ENCODE measurements at regions of chr12 and their contacts with region 1.

Region 1: DNA sequence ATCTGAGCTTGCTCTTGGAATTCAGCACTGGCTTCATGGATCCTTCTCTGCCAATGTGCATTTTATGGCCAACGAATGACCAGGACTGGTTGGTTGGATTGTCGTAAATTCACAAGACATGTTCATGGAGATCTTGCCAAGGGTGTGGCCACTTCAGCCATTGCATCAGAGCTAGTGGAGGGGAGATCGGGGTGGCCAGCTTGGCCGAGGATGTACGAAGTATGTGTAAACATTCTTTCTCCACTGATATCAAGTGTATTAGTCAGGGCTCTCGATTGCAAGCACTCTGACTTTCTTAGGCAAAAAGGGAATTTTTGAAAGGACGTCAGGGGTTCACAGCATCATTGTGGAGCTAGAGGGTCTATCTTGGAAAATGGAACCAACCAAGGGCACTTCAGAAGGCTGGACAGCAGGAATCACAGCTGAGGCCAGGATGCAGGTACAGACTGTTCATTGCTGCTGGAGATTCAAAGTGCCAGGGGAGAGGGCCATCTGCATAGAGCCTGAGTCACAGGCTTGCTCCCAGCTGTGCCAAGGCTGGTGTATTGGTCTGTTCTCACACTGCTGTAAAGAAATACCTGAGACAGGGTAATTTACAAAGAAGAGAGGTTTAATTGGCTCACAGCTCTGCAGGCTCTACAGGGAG is 32.8 kb upstream of the ADGRD1 start:
- DNase-seq: peak in 3 of 4 donors; percentile 16 to 32 (median 27)
- ATAC-seq: peak; percentile 47
- H3K4me3 ChIP-seq: no peak overlapping the region
- H3K27ac ChIP-seq: no peak overlapping the region
- H3K4me1 ChIP-seq: peaks cover 10% of the 10 kb centered on the region
- H3K27me3 ChIP-seq: no peaks in the 10 kb centered on the region
- CTCF ChIP-seq: no peak
- POLR2A ChIP-seq: no peak

Region 2: DNA sequence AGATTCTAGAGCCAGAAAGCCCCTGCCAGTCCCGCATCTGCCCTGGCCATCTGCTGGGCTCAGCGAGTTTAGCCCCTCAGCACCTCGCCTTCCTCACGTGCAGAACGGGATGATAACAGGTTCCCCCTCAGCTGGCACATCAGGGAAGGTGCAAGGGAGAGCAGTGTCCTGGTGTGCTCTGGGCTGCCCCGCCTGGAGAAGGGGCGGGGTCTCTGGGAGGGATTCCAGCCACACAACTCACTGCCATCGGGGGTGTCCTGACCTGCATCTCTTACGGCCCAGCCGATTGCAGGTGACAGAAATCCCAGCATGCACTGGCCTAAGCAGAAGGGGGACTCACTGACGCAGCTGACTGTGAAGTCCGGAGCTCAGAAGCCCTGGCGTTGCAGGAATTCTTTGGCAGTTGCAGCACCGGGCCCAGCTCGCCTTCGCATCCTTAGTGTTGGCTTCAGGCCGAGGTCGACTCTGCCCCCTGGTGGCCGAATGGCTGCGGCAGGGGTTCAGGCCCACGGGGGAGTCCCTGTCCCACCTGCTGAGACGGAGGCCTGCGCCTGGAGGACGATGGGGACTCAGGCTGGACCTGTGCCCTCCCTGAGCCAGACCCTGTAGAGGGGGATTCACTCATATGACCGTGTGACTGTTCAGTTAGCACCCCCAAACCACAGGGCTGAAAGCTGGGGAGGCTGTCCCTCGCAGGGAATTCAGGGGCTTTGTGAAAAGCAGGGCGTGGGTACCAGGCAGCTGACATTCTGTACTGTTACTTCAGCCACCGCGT is 211.4 kb after region 1 on chr12:
- intact Hi-C with region 1: loop called (anchors 10 kb)
- DNase-seq: peak; percentile 48 to 68 (median 58)
- ATAC-seq: peak; percentile 54
- H3K4me3 ChIP-seq: no peak overlapping the region
- H3K27ac ChIP-seq: no peak overlapping the region
- H3K4me1 ChIP-seq: no peaks in the 10 kb centered on the region
- H3K27me3 ChIP-seq: no peaks in the 10 kb centered on the region
- CTCF ChIP-seq: peak; percentile 37 to 65 (median 61)
- POLR2A ChIP-seq: no peak

Measured in body of pancreas (tissue), 4 donors.